HCT116 (cell line): ENCODE measurements at regions of chr4 and their contacts with region 1.

Region 1: GRCh38 chr4:125314676-125315575 is at the start of gene FAT4:
- DNase-seq: peak; percentile 85
- ATAC-seq: peak; percentile 96
- H3K4me3 ChIP-seq: peak within 1 kb of the TSS; percentile 80 to 95
- H3K27ac ChIP-seq: peak within 1 kb of the TSS; percentile 51; the same call in 1 of the 2 replicates
- H3K4me1 ChIP-seq: peaks cover 11 to 15% of the 10 kb centered on the region in 2 experiments; a peak in 3 of 4 replicates
- H3K27me3 ChIP-seq: no peaks in the 10 kb centered on the region
- CTCF ChIP-seq: no peak
- POLR2A ChIP-seq: no peak
- RAD21 ChIP-seq: no peak
- total RNA-seq, gene FAT4: 0.71 TPM

Region 2: GRCh38 chr4:124703154-124703553 is 611.8 kb before region 1 on chr4:
- CTCF ChIA-PET with region 1: no interaction called
- POLR2A ChIA-PET with region 1: no interaction called
- RAD21 ChIA-PET with region 1: no interaction called
- intact Hi-C with region 1: no loop called
- DNase-seq: no peak
- ATAC-seq: no peak
- H3K4me3 ChIP-seq: no peak overlapping the region
- H3K27ac ChIP-seq: no peak overlapping the region
- H3K4me1 ChIP-seq: no peaks in the 10 kb centered on the region
- H3K27me3 ChIP-seq: no peaks in the 10 kb centered on the region
- CTCF ChIP-seq: no peak
- POLR2A ChIP-seq: no peak
- RAD21 ChIP-seq: no peak

Region 3: GRCh38 chr4:125440814-125441213 is 125.9 kb after region 1 on chr4:
- CTCF ChIA-PET with region 1: no interaction called
- POLR2A ChIA-PET with region 1: no interaction called
- RAD21 ChIA-PET with region 1: no interaction called
- intact Hi-C with region 1: no loop called
- DNase-seq: no peak
- ATAC-seq: no peak
- H3K4me3 ChIP-seq: no peak overlapping the region
- H3K27ac ChIP-seq: no peak overlapping the region
- H3K4me1 ChIP-seq: no peaks in the 10 kb centered on the region
- H3K27me3 ChIP-seq: no peaks in the 10 kb centered on the region
- CTCF ChIP-seq: no peak
- POLR2A ChIP-seq: no peak
- RAD21 ChIP-seq: no peak

Region 4: DNA sequence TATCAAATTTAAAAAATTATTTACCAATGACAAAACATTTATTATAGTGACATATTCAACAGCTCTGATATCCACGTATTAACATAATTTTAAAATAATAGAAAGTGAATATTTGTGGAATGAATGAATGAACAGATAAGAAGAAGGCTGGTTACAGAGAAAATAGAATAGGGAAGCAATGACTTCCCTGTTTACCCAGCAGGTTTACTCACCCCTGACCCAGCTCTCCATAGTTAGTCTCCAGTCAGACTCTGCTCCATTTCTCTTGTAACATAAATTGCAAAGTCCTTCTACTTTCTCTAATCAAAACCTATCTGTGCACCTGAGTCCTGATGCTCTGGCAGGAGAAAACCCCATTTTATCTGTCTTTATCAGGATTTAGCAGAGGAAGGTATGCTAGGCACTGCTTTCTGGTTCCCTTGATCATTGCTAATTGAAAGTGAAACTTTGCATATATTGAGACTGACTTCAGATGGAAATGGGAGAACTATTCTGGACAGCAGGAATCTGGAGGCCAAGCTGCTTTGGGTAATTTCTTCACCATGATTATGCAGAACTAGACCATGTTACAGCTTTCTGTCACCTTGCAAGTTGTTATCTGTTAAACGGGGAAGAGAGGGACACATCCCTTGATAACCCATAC is 362.9 kb after region 1 on chr4:
- CTCF ChIA-PET with region 1: no interaction called
- POLR2A ChIA-PET with region 1: no interaction called
- RAD21 ChIA-PET with region 1: no interaction called
- intact Hi-C with region 1: no loop called
- DNase-seq: no peak
- ATAC-seq: no peak
- H3K4me3 ChIP-seq: no peak overlapping the region
- H3K27ac ChIP-seq: no peak overlapping the region
- H3K4me1 ChIP-seq: no peaks in the 10 kb centered on the region
- H3K27me3 ChIP-seq: no peaks in the 10 kb centered on the region
- CTCF ChIP-seq: no peak
- POLR2A ChIP-seq: no peak
- RAD21 ChIP-seq: no peak

Region 5: DNA sequence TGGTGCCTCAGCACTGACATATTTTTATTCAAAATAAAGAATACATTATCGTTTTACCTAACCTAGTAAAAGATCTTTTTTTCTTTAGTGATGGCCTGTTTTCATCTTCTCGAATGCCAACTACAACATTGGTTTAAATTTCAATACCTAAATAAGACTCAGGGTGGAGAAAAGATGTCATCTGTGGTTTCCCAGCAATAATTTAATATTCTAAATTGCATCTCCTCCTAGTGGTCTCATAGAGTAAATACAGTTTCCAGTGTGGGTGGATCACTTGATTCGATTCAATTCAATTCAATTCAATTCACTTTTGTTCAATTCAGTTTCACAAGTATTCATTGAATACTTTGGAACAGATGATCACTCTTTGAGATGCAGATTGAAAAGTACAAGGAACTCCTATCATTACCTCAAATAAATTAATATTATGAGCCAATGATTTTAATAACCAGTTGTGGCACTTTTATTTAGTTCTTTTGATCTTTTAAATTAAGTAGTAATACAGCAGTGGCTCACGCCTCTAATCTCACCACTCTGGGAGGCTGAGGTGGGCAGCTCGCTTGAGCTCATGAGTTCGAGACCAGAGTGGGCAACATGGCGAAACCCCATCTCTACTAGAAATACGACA is 427.0 kb after region 1 on chr4:
- CTCF ChIA-PET with region 1: interaction called, 4 read pairs
- POLR2A ChIA-PET with region 1: no interaction called
- RAD21 ChIA-PET with region 1: no interaction called
- intact Hi-C with region 1: loop called (anchors 2 kb)
- DNase-seq: no peak
- ATAC-seq: peak; percentile 76
- H3K4me3 ChIP-seq: no peak overlapping the region
- H3K27ac ChIP-seq: no peak overlapping the region
- H3K4me1 ChIP-seq: no peaks in the 10 kb centered on the region
- H3K27me3 ChIP-seq: no peaks in the 10 kb centered on the region
- CTCF ChIP-seq: peak; percentile 24 to 69 (median 61)
- POLR2A ChIP-seq: no peak
- RAD21 ChIP-seq: peak; percentile 70

Region 6: GRCh38 chr4:125750828-125751466 is 436.0 kb after region 1 on chr4:
- CTCF ChIA-PET with region 1: interaction called, 50 read pairs
- POLR2A ChIA-PET with region 1: interaction called, 6 read pairs
- RAD21 ChIA-PET with region 1: interaction called, 4 to 9 read pairs
- intact Hi-C with region 1: loop called (anchors 1 kb)
- DNase-seq: no peak
- ATAC-seq: peak; percentile 78
- H3K4me3 ChIP-seq: no peak overlapping the region
- H3K27ac ChIP-seq: no peak overlapping the region
- H3K4me1 ChIP-seq: no peaks in the 10 kb centered on the region
- H3K27me3 ChIP-seq: no peaks in the 10 kb centered on the region
- CTCF ChIP-seq: peak; percentile 13 to 38 (median 25); a peak in 4 of 6 replicates
- POLR2A ChIP-seq: no peak
- RAD21 ChIP-seq: peak; percentile 62

Region 7: DNA sequence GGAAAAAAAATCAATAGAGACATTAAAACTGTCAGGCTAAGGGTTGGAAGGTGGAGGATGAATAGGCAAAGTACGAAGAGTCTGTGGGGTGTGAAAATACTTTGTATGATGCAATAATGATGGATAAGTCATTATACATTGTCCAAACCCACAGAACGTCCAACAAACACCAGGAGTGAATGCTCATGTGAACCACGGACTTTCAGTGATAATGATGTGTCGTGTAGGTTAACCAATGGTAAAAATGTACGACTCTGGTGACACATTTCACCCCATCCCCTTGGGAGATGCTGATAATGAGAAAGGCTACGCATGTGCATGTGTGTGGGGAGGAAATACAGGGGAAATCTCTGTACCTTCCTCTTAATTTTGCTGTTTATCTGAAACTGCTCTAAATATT is 665.0 kb after region 1 on chr4:
- CTCF ChIA-PET with region 1: interaction called, 4 read pairs
- POLR2A ChIA-PET with region 1: no interaction called
- RAD21 ChIA-PET with region 1: interaction called in 1 of 2 experiments, 3 read pairs
- intact Hi-C with region 1: loop called (anchors 1 kb)
- DNase-seq: no peak
- ATAC-seq: no peak
- H3K4me3 ChIP-seq: no peak overlapping the region
- H3K27ac ChIP-seq: no peak overlapping the region
- H3K4me1 ChIP-seq: no peaks in the 10 kb centered on the region
- H3K27me3 ChIP-seq: no peaks in the 10 kb centered on the region
- CTCF ChIP-seq: no peak
- POLR2A ChIP-seq: no peak
- RAD21 ChIP-seq: no peak

Region 8: DNA sequence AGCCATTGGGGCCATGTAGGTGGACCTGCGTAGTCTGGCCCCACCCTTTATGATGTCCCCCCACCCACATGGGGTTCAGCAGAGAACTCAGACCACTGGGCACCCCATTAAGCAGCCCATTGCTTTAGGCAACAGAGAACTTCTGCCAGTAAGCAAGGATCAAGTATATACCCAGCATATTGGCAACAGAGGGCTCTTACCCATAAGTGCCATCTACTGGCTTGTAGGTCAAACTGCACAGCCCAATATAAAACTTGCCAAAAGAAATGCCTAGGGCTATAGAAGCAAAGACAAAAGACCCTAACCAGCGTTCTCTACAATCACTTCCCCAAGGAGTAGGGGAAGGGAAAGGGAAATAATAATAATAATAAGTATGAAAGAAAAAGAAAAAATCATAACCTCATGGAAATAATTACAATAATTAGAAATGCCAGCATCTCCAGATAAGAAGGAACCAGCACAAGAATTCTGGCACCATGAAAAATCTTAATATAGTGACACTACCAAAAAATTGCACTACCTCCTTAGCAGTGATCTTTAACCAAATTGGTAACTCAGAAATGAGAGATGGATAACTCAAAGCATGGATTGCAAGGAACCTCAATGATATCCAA is 1090.5 kb after region 1 on chr4:
- CTCF ChIA-PET with region 1: no interaction called
- POLR2A ChIA-PET with region 1: no interaction called
- RAD21 ChIA-PET with region 1: no interaction called
- intact Hi-C with region 1: loop called (anchors 5 kb)
- DNase-seq: no peak
- ATAC-seq: peak; percentile 83
- H3K4me3 ChIP-seq: no peak overlapping the region
- H3K27ac ChIP-seq: no peak overlapping the region
- H3K4me1 ChIP-seq: no peaks in the 10 kb centered on the region
- H3K27me3 ChIP-seq: no peaks in the 10 kb centered on the region
- CTCF ChIP-seq: peak; percentile 19 to 65 (median 65); a peak in 4 of 6 replicates
- POLR2A ChIP-seq: no peak
- RAD21 ChIP-seq: peak; percentile 54

Region 9: GRCh38 chr4:126583509-126583908 is 1268.6 kb after region 1 on chr4:
- CTCF ChIA-PET with region 1: interaction called, 10 read pairs
- POLR2A ChIA-PET with region 1: no interaction called
- RAD21 ChIA-PET with region 1: no interaction called
- intact Hi-C with region 1: loop called (anchors 5 kb)
- DNase-seq: peak; percentile 26
- ATAC-seq: peak; percentile 90
- H3K4me3 ChIP-seq: no peak overlapping the region
- H3K27ac ChIP-seq: no peak overlapping the region
- H3K4me1 ChIP-seq: no peaks in the 10 kb centered on the region
- H3K27me3 ChIP-seq: no peaks in the 10 kb centered on the region
- CTCF ChIP-seq: peak in 2 of 3 experiments; percentile 46 to 51; a peak in 3 of 6 replicates
- POLR2A ChIP-seq: no peak
- RAD21 ChIP-seq: peak; percentile 45; the same call in 1 of the 2 replicates

Region 10: GRCh38 chr4:126604268-126604867 is 1289.4 kb after region 1 on chr4:
- CTCF ChIA-PET with region 1: interaction called, 3 read pairs
- POLR2A ChIA-PET with region 1: no interaction called
- RAD21 ChIA-PET with region 1: no interaction called
- intact Hi-C with region 1: loop called (anchors 1 kb)
- DNase-seq: peak; percentile 27
- ATAC-seq: peak; percentile 74
- H3K4me3 ChIP-seq: no peak overlapping the region
- H3K27ac ChIP-seq: no peak overlapping the region
- H3K4me1 ChIP-seq: no peaks in the 10 kb centered on the region
- H3K27me3 ChIP-seq: no peaks in the 10 kb centered on the region
- CTCF ChIP-seq: peak; percentile 44 to 80 (median 79); a peak in 5 of 6 replicates
- POLR2A ChIP-seq: no peak
- RAD21 ChIP-seq: peak; percentile 66